ENCODE measurements at regions of chr2 and their contacts with region 1.

Region 1: GRCh38 chr2:97095661-97096060 is 979 bp upstream of the FAHD2B start:
- DNase-seq: no peak
- H3K4me3 ChIP-seq: no peak overlapping the region
- H3K27ac ChIP-seq: peak overlapping the region in 1 of 4 donors; percentile 76
- H3K4me1 ChIP-seq: peaks cover 0 to 8% (median 5%) of the 10 kb centered on the region in 4 donors
- H3K27me3 ChIP-seq: no peaks in the 10 kb centered on the region
- CTCF ChIP-seq: no peak
- EP300 ChIP-seq: no peak
- POLR2A ChIP-seq: no peak

Region 2: DNA sequence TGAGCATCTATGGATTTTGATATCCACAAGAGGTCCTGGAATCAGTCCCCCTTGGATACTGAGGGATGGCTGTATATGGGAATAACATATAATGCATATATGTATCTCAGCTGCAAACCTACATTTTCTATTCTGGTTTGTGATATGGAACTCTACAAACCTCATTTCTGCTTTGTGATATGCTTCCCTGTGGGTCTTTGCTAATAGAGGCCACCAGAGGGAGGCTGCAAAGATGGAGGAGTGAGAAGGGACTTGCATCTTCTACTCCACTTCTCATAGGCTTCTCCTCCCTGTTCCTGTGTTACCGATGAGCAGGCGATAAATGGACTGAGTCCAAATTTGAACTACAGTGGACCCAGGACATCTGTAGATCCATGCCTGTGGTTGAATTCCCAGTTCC is 521.3 kb before region 1 on chr2:
- in situ Hi-C with region 1: no loop called
- intact Hi-C with region 1: no loop called
- DNase-seq: no peak
- H3K4me3 ChIP-seq: no peak overlapping the region
- H3K27ac ChIP-seq: no peak overlapping the region
- H3K4me1 ChIP-seq: no peaks in the 10 kb centered on the region
- H3K27me3 ChIP-seq: no peaks in the 10 kb centered on the region
- CTCF ChIP-seq: no peak
- EP300 ChIP-seq: no peak
- POLR2A ChIP-seq: no peak

Region 3: GRCh38 chr2:96801005-96801785 is 294.5 kb before region 1 on chr2:
- in situ Hi-C with region 1: no loop called
- intact Hi-C with region 1: no loop called
- DNase-seq: peak; percentile 85
- H3K4me3 ChIP-seq: no peak overlapping the region
- H3K27ac ChIP-seq: peak overlapping the region; percentile 10 to 41 (median 20)
- H3K4me1 ChIP-seq: peaks cover 0 to 9% (median 5%) of the 10 kb centered on the region in 4 donors
- H3K27me3 ChIP-seq: no peaks in the 10 kb centered on the region
- CTCF ChIP-seq: peak; percentile 79 to 97 (median 90)
- EP300 ChIP-seq: no peak
- POLR2A ChIP-seq: no peak

Region 4: DNA sequence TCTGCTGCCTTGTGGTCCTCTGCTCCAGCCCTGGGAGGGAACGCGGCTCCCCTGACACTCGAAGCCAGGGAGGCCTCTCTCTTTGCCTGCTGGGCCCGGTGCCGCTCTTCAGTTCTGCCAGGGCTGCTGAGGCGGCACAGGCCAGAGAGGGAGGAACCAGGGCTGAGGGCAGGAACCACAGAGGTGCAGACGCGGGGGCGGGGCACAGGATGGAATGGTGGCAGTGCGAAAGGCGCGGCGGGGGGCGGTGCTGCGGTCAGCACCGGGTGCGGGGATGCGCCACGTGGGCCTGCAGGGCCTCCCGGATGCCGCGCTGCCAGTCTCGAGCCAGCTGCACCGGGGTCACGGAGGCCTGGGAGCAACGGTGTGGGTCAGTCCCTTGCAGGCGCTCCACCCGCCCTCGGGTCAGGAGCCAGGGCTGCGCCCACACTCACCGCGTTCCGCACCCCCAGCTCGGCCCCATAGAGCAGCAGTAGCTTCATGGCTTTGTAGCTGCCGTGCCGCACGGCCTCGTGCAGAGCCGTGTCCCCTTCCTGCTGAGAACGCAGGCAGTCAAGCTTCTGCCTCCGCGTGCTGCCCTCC is 256.3 kb before region 1 on chr2:
- in situ Hi-C with region 1: loop called in 1 of 4 experiments (anchors 25 kb)
- intact Hi-C with region 1: no loop called
- DNase-seq: peak; percentile 85
- H3K4me3 ChIP-seq: peak overlapping the region in 2 of 4 donors; percentile 3 to 6
- H3K27ac ChIP-seq: no peak overlapping the region
- H3K4me1 ChIP-seq: peaks cover 4 to 13% (median 10%) of the 10 kb centered on the region in 4 donors
- H3K27me3 ChIP-seq: no peaks in the 10 kb centered on the region
- CTCF ChIP-seq: no peak
- EP300 ChIP-seq: no peak
- POLR2A ChIP-seq: no peak

Region 5: DNA sequence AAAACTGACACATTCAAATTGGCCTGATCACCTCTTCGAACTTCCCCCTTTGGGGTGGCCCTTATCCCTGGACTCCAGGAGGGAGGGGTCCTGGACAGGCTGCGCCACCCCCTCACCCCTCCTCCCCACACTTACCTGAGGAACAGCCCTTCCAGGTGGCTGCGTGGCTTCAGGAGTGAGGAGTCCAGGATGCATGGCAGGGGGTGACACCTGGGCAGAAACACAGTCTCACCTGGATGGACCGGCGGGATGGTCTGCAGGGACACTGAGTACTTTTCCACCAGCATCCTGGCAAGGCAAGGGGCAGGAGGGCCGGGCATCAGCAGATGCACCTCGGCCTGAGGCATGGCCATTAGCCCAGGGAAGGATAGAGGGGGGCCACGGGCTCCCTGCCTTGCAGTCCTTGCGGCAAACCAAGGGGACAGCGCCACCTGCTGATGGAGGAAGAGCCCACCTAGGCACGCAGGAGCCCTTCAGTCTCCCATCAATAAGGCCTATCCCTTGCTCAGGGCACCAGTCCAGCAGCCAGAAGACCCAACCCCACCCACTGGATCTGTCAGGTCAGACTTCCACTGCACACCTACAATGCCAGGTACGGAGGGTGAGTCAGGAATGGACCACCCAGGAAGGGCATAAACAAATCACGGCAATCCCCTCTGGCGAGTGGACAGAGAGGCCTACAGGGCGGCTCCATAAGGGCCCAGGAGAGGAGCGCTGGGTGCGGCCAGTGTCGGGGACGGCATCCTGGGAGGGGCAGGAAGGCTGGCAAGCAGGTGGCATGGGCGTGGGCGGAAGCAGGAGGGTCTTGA is 135.3 kb before region 1 on chr2:
- in situ Hi-C with region 1: loop called in 1 of 4 experiments (anchors 25 kb)
- intact Hi-C with region 1: no loop called
- DNase-seq: peak; percentile 91
- H3K4me3 ChIP-seq: no peak overlapping the region
- H3K27ac ChIP-seq: peak overlapping the region in 3 of 4 donors; percentile 46 to 59 (median 47)
- H3K4me1 ChIP-seq: peaks cover 0 to 40% (median 19%) of the 10 kb centered on the region in 4 donors
- H3K27me3 ChIP-seq: no peaks in the 10 kb centered on the region
- CTCF ChIP-seq: peak; percentile 84 to 94 (median 89)
- EP300 ChIP-seq: no peak
- POLR2A ChIP-seq: no peak

Region 6: DNA sequence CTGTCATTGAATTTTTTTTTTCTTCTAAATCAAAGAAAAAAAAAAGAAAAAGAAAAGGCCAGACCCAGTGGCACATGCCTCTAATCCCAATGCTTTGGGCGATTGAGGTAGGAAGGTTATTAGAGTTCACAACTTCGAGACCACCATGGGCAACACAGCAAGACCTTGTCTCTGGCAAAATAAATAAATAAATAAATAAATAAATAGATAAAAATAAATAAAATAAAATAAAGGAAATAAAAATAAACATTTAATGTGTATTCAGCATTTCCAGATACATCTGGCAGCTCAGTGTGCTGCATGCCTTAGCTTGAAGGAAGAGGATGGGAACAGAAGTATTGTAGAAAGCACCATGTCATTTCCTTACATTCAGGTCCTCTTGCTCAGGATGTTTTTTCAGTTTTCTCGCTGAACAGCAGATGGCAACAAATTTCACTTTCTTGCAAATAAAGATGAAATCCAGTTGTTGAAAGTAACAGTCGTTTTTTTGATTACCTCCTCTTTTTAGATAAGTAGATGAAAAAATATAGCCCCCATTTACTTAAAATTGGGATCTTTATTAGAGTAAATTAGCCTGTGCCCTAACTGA is 83.6 kb before region 1 on chr2:
- in situ Hi-C with region 1: loop called in 2 of 4 experiments (anchors 25 kb)
- intact Hi-C with region 1: no loop called
- DNase-seq: no peak
- H3K4me3 ChIP-seq: no peak overlapping the region
- H3K27ac ChIP-seq: no peak overlapping the region
- H3K4me1 ChIP-seq: no peaks in the 10 kb centered on the region
- H3K27me3 ChIP-seq: peaks cover 9% of the 10 kb centered on the region
- CTCF ChIP-seq: peak in 3 of 5 experiments; percentile 20 to 21 (median 20)
- EP300 ChIP-seq: no peak
- POLR2A ChIP-seq: no peak